BJ (cell line): ENCODE measurements at regions of chr2 and their contacts with region 1.

Region 1: GRCh38 chr2:162301151-162301804 is 17.2 kb downstream of the IFIH1 start:
- DNase-seq: no peak
- H3K4me3 ChIP-seq: no peak overlapping the region
- H3K27me3 ChIP-seq: no peaks in the 10 kb centered on the region
- CTCF ChIP-seq: peak; percentile 74

Region 2: DNA sequence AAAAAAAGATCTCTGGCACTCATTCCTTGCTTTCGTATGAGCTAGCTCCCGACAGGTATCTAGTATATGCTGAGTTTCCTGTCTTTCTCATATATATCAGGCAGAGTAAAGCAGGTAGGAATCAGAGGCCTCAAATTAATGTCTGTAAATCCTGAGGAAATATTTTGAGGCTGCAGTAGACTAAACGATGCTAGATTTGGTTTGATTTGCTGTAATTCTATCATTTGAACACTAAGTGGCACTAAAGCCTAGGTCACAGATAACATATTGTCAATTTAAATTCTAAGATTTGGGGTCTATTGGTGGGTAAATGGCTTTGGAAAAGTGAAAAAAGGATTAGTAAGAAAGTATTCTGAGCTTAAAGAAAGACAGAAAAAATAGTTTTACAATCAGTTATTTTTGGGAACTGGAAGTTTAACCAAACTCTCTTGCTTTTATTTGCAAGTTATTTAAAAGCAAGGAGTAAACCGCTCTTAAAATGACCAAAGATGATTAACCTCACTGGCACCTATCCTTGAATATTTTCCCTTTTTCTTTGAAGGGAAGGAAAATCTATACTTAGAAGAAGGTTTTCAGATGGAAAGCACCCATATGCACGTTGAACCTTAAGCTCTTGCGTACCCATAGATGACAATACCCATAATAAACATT is 714.6 kb before region 1 on chr2:
- CTCF ChIA-PET with region 1: interaction called, 11 read pairs
- POLR2A ChIA-PET with region 1: no interaction called
- DNase-seq: peak; percentile 1
- H3K4me3 ChIP-seq: no peak overlapping the region
- H3K27me3 ChIP-seq: no peaks in the 10 kb centered on the region
- CTCF ChIP-seq: peak; percentile 62

Region 3: GRCh38 chr2:162153608-162154224 is 147.6 kb before region 1 on chr2:
- CTCF ChIA-PET with region 1: interaction called, 106 read pairs
- POLR2A ChIA-PET with region 1: no interaction called
- DNase-seq: no peak
- H3K4me3 ChIP-seq: no peak overlapping the region
- H3K27me3 ChIP-seq: peaks cover 2% of the 10 kb centered on the region; the same call in 1 of the 2 replicates
- CTCF ChIP-seq: peak; percentile 64

Region 4: DNA sequence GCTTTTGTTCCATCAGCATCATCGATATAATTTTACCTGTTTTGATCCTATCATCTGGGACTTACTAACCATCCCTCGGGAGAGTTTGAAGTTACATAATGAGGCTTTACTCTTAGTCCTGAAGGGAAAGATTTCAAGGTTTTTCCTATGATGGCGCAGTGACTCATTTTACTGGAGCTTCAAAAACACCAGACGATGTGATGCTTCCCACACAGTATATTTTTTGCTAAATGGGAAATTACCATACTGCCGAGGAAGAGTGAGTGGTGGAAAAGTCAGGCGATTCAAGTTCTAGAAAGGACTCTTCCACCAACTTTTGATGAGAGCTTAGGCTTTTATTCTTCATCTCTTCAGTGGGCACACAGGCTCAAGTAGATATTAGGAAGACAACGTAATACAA is 104.6 kb before region 1 on chr2:
- CTCF ChIA-PET with region 1: interaction called, 15 read pairs
- POLR2A ChIA-PET with region 1: no interaction called
- DNase-seq: no peak
- H3K4me3 ChIP-seq: no peak overlapping the region
- H3K27me3 ChIP-seq: no peaks in the 10 kb centered on the region
- CTCF ChIP-seq: no peak

Region 5: DNA sequence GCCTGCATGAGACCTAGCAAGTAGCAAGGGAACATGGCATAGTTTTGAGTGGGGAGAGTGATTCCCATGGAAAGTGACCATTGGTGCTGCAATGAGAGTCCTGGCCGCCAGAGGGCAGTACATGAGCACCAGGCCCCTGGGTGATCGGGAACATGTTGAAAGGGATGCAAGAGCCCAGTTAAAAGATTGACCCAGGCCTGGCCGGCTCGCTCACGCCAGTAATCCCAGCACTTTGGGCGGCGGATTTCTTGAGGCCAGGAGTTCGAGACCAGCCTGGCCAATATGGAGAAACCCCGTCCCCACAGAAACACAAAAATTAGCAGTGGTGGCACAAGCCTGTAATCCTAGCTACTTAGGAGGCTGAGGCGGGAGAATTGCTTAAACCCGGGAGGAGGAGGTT is 80.2 kb before region 1 on chr2:
- CTCF ChIA-PET with region 1: interaction called, 137 read pairs
- POLR2A ChIA-PET with region 1: no interaction called
- DNase-seq: no peak
- H3K4me3 ChIP-seq: no peak overlapping the region
- H3K27me3 ChIP-seq: no peaks in the 10 kb centered on the region
- CTCF ChIP-seq: peak; percentile 90

Region 6: DNA sequence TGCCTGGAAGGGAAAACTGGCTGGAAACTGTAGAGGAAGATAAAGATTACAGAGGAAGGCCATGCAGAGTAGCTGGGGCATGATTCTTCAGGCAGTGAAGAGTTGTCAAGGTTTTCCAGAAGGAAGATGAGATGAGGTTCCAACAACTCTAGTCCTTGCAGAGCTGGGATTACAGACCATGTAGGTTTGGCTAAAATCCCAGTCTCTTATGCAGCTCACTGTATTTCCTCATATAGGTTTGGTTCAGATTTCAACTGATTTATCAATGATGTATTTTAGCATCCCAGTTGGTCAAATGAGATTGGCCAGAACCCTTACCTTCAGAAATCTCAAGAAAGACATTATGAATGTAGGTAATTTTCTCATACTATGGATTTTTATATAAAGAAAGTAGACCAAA is 74.4 kb before region 1 on chr2:
- CTCF ChIA-PET with region 1: interaction called, 137 read pairs
- POLR2A ChIA-PET with region 1: no interaction called
- DNase-seq: no peak
- H3K4me3 ChIP-seq: no peak overlapping the region
- H3K27me3 ChIP-seq: no peaks in the 10 kb centered on the region
- CTCF ChIP-seq: no peak

Region 7: DNA sequence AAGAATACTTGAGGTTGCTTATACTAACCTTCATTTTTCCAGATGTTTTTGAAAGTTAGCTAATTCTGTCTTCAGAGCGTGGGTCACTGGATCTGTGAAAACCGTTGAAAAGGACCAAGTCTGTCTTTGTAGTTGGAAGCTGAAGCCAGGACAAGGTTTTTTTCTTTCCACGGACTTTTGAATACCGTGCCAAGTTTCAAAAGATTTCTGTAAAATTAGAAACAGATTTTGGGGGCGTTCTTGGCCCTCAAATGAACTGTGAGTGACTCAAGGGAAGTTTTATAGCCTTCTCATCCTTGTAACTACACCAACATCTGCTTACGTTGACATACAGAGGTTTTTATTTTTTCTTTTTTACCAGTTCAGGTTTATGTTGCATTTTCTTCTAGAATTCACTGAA is 58.0 kb before region 1 on chr2 and contains the start of gene FAP:
- CTCF ChIA-PET with region 1: interaction called, 14 read pairs
- POLR2A ChIA-PET with region 1: interaction called, 4 read pairs
- DNase-seq: peak; percentile 91
- H3K4me3 ChIP-seq: peak within 1 kb of the TSS; percentile 51
- H3K27me3 ChIP-seq: no peaks in the 10 kb centered on the region
- CTCF ChIP-seq: no peak
- polyA plus RNA-seq, gene FAP: 135 and 263 TPM in 2 replicates